ENCODE measurements at regions of chr13 and their contacts with region 1.

Region 1: DNA sequence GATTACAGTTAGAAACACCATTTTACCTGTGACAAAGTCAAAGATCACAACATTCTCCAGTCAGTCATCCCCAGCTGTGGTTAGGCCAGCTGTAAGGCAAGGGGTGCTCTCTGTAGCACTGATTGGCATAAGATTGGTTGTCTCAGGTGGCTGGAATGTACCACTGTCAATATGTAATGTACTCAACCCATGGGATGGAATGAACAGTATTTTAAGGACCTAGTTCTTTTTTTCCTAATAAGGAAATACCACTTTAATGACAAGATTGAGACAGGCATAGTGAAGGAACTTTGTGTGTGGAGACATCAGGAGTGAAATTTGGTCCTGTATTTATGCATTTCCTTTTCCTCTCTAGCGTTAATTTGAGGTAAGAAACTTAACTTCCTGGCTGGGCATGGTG is 310.7 kb downstream of the ITGBL1 start:
- DNase-seq: no peak
- ATAC-seq: no peak
- H3K4me3 ChIP-seq: no peak overlapping the region
- H3K27ac ChIP-seq: no peak overlapping the region
- H3K4me1 ChIP-seq: no peaks in the 10 kb centered on the region
- H3K27me3 ChIP-seq: no peaks in the 10 kb centered on the region
- CTCF ChIP-seq: no peak
- POLR2A ChIP-seq: no peak

Region 2: DNA sequence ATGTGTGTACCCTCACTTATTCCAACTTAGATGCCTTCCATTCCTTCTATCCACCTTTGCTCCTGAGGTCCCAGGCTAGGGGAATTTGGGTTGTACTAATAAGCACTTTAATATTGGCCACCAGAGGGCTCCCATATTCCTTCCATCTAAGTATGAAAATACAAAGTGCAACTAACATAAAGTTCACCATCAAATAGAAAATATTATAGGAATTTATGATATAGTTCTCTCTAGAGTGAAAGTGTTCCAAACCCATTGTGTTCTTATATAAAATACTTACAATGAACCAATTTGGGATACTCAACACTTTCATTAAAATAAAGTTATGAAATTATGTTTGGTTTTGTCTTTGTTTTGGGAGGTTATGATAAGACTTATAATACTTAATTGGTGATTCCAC is 248.4 kb before region 1 on chr13:
- intact Hi-C with region 1: loop called (anchors 5 to 10 kb)
- DNase-seq: peak in 1 of 3 donors; percentile 53
- ATAC-seq: peak; percentile 90 to 95 (median 91)
- H3K4me3 ChIP-seq: no peak overlapping the region
- H3K27ac ChIP-seq: no peak overlapping the region
- H3K4me1 ChIP-seq: no peaks in the 10 kb centered on the region
- H3K27me3 ChIP-seq: no peaks in the 10 kb centered on the region
- CTCF ChIP-seq: peak; percentile 66 to 87 (median 72)
- POLR2A ChIP-seq: no peak

Region 3: GRCh38 chr13:101649490-101650126 is 113.6 kb before region 1 on chr13:
- intact Hi-C with region 1: no loop called
- DNase-seq: no peak
- ATAC-seq: peak; percentile 94 to 99 (median 96)
- H3K4me3 ChIP-seq: no peak overlapping the region
- H3K27ac ChIP-seq: peak overlapping the region; percentile 5 to 81 (median 65)
- H3K4me1 ChIP-seq: peaks cover 0 to 16% (median 0%) of the 10 kb centered on the region in 4 donors
- H3K27me3 ChIP-seq: no peaks in the 10 kb centered on the region
- CTCF ChIP-seq: no peak
- POLR2A ChIP-seq: no peak

Region 4: GRCh38 chr13:101955764-101956163 is 192.6 kb after region 1 on chr13:
- intact Hi-C with region 1: no loop called
- DNase-seq: no peak
- ATAC-seq: peak in 1 of 4 donors; percentile 50
- H3K4me3 ChIP-seq: no peak overlapping the region
- H3K27ac ChIP-seq: no peak overlapping the region
- H3K4me1 ChIP-seq: no peaks in the 10 kb centered on the region
- H3K27me3 ChIP-seq: no peaks in the 10 kb centered on the region
- CTCF ChIP-seq: no peak
- POLR2A ChIP-seq: no peak